ENCODE measurements at regions of chr5 and their contacts with region 1.

Region 1: DNA sequence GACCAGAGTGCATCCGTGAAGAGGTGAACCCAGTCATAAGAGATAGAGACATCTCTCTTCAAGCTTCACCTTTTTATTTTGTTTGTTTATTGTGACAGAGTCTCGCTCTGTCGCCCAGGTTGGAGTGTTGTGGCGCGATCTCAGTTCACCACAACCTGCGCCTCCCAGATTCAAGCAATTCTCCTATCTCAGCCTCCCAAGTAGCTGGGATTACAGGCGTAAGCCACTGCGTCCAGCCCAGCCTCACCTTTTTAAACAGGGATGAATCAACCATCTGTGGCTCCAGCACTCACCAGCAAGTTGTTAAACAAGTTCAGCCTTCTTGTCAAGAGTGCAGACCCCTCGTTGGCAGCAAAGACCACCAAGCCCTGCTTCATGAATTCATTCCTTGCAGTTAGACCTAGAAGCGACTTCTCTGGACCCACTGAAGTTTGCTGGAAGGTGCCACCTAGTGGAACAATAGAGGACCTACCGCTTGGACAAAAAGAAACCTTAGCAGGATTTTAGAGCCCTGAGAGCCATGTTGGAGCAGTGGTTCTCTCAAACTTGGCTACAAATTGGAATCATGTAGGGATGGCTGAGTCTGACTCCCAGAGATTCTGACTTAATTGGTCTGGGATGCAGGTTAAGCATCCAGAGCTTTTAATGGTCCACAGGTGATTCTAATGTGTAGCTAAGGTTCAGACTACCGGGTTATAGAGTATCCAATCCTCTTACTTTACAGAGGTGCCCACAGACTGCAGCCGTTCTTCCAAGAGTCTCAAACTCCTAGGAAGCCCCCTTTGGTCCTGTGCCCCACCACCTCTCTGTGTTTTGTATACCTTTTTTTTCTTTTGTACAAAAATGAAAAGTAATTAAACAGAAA is 10.5 kb upstream of the GALNT10 start:
- DNase-seq: peak in 4 of 5 donors; percentile 7 to 57 (median 38)
- H3K4me3 ChIP-seq: no peak overlapping the region
- H3K4me3 Mint-ChIP-seq: peak overlapping the region in 2 of 7 donors; percentile 25 to 31
- H3K27ac ChIP-seq: no peak overlapping the region
- H3K27ac Mint-ChIP-seq: peak overlapping the region in 1 of 8 donors; percentile 54
- H3K4me1 ChIP-seq: peaks cover 3% of the 10 kb centered on the region
- H3K4me1 Mint-ChIP-seq: peaks cover 0 to 5% (median 0%) of the 10 kb centered on the region in 3 donors
- H3K27me3 ChIP-seq: no peaks in the 10 kb centered on the region
- H3K27me3 Mint-ChIP-seq: peaks cover 0 to 16% of the 10 kb centered on the region in 2 donors

Region 2: GRCh38 chr5:153974131-153974812 is 205.8 kb before region 1 on chr5:
- CTCF ChIA-PET with region 1: interaction called, 12 read pairs
- POLR2A ChIA-PET with region 1: no interaction called
- DNase-seq: peak in 3 of 5 donors; percentile 4 to 30 (median 14)
- H3K4me3 ChIP-seq: no peak overlapping the region
- H3K4me3 Mint-ChIP-seq: no peak overlapping the region
- H3K27ac ChIP-seq: no peak overlapping the region
- H3K27ac Mint-ChIP-seq: no peak overlapping the region
- H3K4me1 ChIP-seq: no peaks in the 10 kb centered on the region
- H3K4me1 Mint-ChIP-seq: no peaks in the 10 kb centered on the region
- H3K27me3 ChIP-seq: peaks cover 5% of the 10 kb centered on the region
- H3K27me3 Mint-ChIP-seq: peaks cover 5 to 32% of the 10 kb centered on the region in 2 donors

Region 3: GRCh38 chr5:154273028-154273617 is 93.0 kb after region 1 on chr5:
- CTCF ChIA-PET with region 1: no interaction called
- POLR2A ChIA-PET with region 1: no interaction called
- DNase-seq: peak in 2 of 5 donors; percentile 1 to 39
- H3K4me3 ChIP-seq: no peak overlapping the region
- H3K4me3 Mint-ChIP-seq: peak overlapping the region; percentile 2 to 75 (median 70)
- H3K27ac ChIP-seq: peak overlapping the region; percentile 32
- H3K27ac Mint-ChIP-seq: peak overlapping the region; percentile 47 to 93 (median 88)
- H3K4me1 ChIP-seq: peaks cover 26% of the 10 kb centered on the region
- H3K4me1 Mint-ChIP-seq: peaks cover 43 to 62% (median 50%) of the 10 kb centered on the region in 3 donors
- H3K27me3 ChIP-seq: no peaks in the 10 kb centered on the region
- H3K27me3 Mint-ChIP-seq: no peaks in the 10 kb centered on the region

Measured in CD8-positive, alpha-beta memory T cell (primary cell).